MCF 10A (cell line): ENCODE measurements at regions of chr3 and their contacts with region 1.

Region 1: DNA sequence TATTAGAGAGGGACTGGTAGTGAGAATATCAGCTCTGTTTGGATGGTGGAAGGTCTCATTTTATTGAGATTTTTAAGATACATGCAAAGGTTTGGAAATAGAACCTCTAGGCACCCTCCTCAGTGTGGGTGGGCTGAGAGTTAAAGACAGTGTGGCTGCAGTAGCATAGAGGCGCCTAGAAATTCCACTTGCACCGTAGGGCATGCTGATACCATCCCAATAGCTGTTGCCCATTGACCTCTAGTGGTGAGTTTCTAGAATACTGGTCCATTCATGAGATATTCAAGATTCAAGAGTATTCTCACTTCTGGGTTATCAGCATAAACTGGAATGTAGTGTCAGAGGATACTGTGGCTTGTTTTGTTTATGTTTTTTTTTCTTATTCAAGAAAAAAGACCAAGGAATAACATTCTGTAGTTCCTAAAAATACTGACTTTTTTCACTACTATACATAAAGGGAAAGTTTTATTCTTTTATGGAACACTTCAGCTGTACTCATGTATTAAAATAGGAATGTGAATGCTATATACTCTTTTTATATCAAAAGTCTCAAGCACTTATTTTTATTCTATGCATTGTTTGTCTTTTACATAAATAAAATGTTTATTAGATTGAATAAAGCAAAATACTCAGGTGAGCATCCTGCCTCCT is 87.2 kb downstream of the TGFBR2 start:
- DNase-seq: peak; percentile 75
- H3K4me3 Mint-ChIP-seq: no peak overlapping the region
- H3K27ac Mint-ChIP-seq: no peak overlapping the region
- H3K4me1 Mint-ChIP-seq: peaks cover 23% of the 10 kb centered on the region
- H3K27me3 Mint-ChIP-seq: no peaks in the 10 kb centered on the region
- CTCF ChIP-seq: peak; percentile 71

Region 2: GRCh38 chr3:29324180-29324651 is 1369.4 kb before region 1 on chr3:
- CTCF ChIA-PET with region 1: no interaction called
- POLR2A ChIA-PET with region 1: no interaction called
- intact Hi-C with region 1: no loop called
- DNase-seq: peak; percentile 27
- H3K4me3 Mint-ChIP-seq: peak overlapping the region; percentile 32
- H3K27ac Mint-ChIP-seq: peak overlapping the region; percentile 86
- H3K4me1 Mint-ChIP-seq: peaks cover 24% of the 10 kb centered on the region
- H3K27me3 Mint-ChIP-seq: no peaks in the 10 kb centered on the region
- CTCF ChIP-seq: no peak

Region 3: DNA sequence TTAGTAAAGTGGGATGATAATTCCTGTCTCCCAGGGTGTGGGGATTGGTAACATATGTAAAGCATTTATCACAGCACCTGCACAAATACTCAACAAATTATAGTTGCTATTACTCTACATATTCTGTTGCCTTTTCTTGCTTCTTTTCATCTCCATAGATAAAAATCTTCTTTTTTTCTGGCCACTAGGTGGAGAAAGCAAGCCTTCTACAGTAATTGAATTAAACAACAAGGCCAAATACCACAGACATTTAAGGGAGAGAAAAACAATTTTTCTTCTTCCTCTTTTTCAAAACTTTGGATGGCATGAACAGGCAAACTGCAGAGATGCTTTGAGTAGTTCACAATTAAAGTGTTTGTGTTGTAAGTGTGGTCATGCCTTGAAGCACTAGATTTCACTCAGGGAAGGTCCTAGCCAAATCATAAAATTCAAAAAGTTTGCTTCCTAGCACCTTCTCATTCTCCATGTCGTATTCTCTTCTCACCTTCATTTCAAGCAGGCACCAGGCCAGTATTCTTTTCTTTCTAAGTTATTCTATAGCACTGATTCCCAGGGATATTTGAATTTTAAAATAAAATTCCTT is 580.6 kb before region 1 on chr3:
- CTCF ChIA-PET with region 1: interaction called, 43 read pairs
- POLR2A ChIA-PET with region 1: interaction called, 4 read pairs
- intact Hi-C with region 1: loop called (anchors 1 kb)
- DNase-seq: peak; percentile 46
- H3K4me3 Mint-ChIP-seq: no peak overlapping the region
- H3K27ac Mint-ChIP-seq: no peak overlapping the region
- H3K4me1 Mint-ChIP-seq: peaks cover 16% of the 10 kb centered on the region
- H3K27me3 Mint-ChIP-seq: no peaks in the 10 kb centered on the region
- CTCF ChIP-seq: peak; percentile 66

Region 4: GRCh38 chr3:30286007-30286669 is 407.5 kb before region 1 on chr3:
- CTCF ChIA-PET with region 1: interaction called, 3 read pairs
- POLR2A ChIA-PET with region 1: interaction called, 3 read pairs
- intact Hi-C with region 1: loop called (anchors 5 kb)
- DNase-seq: peak; percentile 97
- H3K4me3 Mint-ChIP-seq: peak overlapping the region; percentile 26
- H3K27ac Mint-ChIP-seq: peak overlapping the region; percentile 69
- H3K4me1 Mint-ChIP-seq: peaks cover 58% of the 10 kb centered on the region
- H3K27me3 Mint-ChIP-seq: no peaks in the 10 kb centered on the region
- CTCF ChIP-seq: no peak

Region 5: DNA sequence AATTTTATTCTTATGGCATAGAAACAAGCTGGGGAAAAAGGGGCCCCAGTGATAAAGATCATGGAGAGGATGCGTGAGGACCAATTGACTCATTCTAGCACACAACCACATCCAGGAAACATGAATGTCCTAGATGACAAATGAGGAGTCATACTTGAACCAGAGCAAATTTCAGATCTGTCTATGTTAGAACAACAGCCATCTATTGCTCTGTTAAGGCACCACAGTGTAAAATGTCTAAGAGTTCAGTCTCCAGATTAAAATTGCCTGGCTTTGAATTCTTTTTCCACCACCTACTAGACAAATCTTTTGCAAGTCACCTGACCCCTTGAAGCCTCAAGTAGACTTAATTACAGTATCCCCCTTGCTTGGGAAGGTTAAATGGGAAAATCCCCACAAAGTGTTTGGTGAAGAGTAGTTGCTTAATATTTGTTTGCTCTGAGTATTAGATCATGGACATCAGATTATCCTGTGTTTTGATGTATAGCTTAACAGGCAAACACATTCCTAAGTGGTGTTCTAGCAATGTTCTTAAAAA is 345.8 kb before region 1 on chr3:
- CTCF ChIA-PET with region 1: interaction called, 7 read pairs
- POLR2A ChIA-PET with region 1: interaction called, 3 read pairs
- intact Hi-C with region 1: loop called (anchors 5 kb)
- DNase-seq: peak; percentile 85
- H3K4me3 Mint-ChIP-seq: no peak overlapping the region
- H3K27ac Mint-ChIP-seq: peak overlapping the region; percentile 76
- H3K4me1 Mint-ChIP-seq: peaks cover 54% of the 10 kb centered on the region
- H3K27me3 Mint-ChIP-seq: no peaks in the 10 kb centered on the region
- CTCF ChIP-seq: no peak

Region 6: GRCh38 chr3:30676424-30677346 is 16.9 kb before region 1 on chr3:
- CTCF ChIA-PET with region 1: interaction called, 27 read pairs
- POLR2A ChIA-PET with region 1: interaction called, 6 read pairs
- intact Hi-C with region 1: no loop called
- DNase-seq: no peak
- H3K4me3 Mint-ChIP-seq: no peak overlapping the region
- H3K27ac Mint-ChIP-seq: peak overlapping the region; percentile 63
- H3K4me1 Mint-ChIP-seq: peaks cover 41% of the 10 kb centered on the region
- H3K27me3 Mint-ChIP-seq: no peaks in the 10 kb centered on the region
- CTCF ChIP-seq: no peak

Region 7: DNA sequence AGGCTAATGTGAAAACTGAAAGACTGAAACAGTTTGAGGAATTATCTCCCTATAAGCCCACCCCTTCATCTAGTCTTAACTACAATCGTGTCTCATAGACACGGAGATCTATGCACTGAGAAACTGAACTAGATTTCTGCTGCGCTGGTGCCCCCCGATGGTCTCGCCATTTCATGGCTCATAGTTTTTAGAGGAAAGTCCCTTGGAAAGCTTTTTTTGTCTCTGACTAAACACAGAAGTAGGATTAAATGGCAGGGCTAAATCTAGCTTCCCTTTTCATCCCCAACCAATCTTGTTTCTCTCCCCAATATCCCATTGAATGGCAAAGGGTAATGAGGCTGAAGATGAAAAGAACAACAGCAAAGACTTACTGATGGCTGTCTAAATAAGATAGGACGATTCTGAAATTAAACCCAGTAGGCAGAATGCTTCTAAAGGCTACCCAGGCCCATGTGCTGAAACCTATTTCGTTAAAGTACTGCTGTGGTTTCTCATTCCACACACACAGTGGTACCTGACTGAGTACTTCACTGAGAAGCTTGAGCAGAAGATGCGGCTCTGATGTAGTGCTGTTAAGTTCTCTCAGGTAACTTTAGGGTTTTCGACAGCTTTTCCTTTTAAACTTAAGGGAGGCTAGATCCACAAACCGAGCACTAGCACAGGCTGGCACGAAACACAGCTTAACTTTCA is 58.2 kb after region 1 on chr3:
- CTCF ChIA-PET with region 1: interaction called, 5 read pairs
- POLR2A ChIA-PET with region 1: no interaction called
- intact Hi-C with region 1: loop called (anchors 2 kb)
- DNase-seq: peak; percentile 52
- H3K4me3 Mint-ChIP-seq: no peak overlapping the region
- H3K27ac Mint-ChIP-seq: no peak overlapping the region
- H3K4me1 Mint-ChIP-seq: peaks cover 6% of the 10 kb centered on the region
- H3K27me3 Mint-ChIP-seq: no peaks in the 10 kb centered on the region
- CTCF ChIP-seq: no peak

Region 8: DNA sequence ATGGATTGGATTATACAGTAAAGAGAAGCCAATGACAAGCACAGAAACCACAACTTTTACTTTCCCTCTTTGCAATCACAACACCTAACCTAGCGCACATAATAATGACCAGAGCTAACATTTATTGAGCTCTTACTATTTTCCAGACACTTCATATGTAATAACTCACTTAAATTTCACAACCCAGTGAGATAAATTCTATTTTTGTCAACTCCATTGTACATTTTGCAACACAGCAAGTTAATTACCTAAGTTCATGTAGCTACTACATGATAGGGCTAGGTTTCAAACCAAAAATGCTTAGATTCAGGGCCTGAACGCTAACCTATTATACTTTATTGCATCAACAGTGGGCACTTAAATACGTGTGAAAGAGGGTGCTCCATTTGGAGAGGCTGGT is 111.4 kb after region 1 on chr3:
- CTCF ChIA-PET with region 1: no interaction called
- POLR2A ChIA-PET with region 1: no interaction called
- intact Hi-C with region 1: no loop called
- DNase-seq: no peak
- H3K4me3 Mint-ChIP-seq: no peak overlapping the region
- H3K27ac Mint-ChIP-seq: no peak overlapping the region
- H3K4me1 Mint-ChIP-seq: peaks cover 3% of the 10 kb centered on the region
- H3K27me3 Mint-ChIP-seq: no peaks in the 10 kb centered on the region
- CTCF ChIP-seq: no peak

Region 9: GRCh38 chr3:31227131-31227562 is 533.6 kb after region 1 on chr3:
- CTCF ChIA-PET with region 1: no interaction called
- POLR2A ChIA-PET with region 1: no interaction called
- intact Hi-C with region 1: no loop called
- DNase-seq: no peak
- H3K4me3 Mint-ChIP-seq: no peak overlapping the region
- H3K27ac Mint-ChIP-seq: no peak overlapping the region
- H3K4me1 Mint-ChIP-seq: no peaks in the 10 kb centered on the region
- H3K27me3 Mint-ChIP-seq: peaks cover 1% of the 10 kb centered on the region
- CTCF ChIP-seq: no peak

Region 10: GRCh38 chr3:31790193-31791089 is 1096.8 kb after region 1 on chr3:
- CTCF ChIA-PET with region 1: no interaction called
- POLR2A ChIA-PET with region 1: no interaction called
- intact Hi-C with region 1: no loop called
- DNase-seq: no peak
- H3K4me3 Mint-ChIP-seq: no peak overlapping the region
- H3K27ac Mint-ChIP-seq: peak overlapping the region; percentile 51
- H3K4me1 Mint-ChIP-seq: peaks cover 17% of the 10 kb centered on the region
- H3K27me3 Mint-ChIP-seq: no peaks in the 10 kb centered on the region
- CTCF ChIP-seq: no peak